ENCODE measurements at regions of chr7 and their contacts with region 1.

Region 1: DNA sequence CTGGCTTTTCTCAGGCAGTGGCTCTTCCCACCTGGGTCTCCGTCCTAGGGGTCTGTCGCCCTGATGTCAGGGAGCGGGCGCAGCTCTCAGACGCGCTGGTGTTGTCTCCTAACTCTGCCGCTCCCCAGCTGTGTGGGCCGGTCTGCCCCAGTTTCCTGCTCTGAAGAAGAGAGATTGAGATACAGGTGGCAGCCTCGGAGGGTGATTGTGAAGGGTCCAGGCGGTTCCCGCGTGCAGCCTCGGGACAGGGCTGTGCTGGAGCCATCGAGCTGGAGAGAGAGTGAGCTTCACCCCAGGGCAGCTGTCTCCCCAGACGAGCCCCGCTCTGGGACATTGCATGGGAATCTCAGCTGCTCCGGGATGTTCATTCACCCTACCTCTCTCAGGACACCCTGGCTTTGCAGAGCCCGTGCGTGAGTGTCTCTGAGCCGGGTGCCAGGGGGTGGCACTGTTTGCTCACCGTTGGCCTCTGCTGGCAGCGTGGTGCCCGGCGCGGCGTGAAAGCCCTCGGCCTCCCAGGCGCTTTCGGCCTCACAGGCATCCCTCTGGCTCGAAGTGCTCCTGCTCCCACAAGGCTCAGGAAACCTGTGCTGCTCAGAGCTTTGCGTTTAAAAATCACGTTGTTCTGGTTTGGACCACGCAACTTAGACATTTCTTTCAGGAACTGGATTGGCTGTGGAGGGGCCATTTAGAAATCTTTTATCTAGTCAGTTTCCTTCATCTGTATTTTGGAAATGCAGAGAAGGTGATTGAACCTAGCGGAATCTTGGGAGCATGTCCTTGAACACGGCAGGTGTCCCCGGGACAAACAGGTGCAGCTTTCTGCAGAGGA is 33.8 kb upstream of the ZFAND2A start:
- DNase-seq: peak; percentile 90
- H3K4me3 ChIP-seq: no peak overlapping the region
- H3K27ac ChIP-seq: no peak overlapping the region
- H3K4me1 ChIP-seq: peaks cover 0 to 3% of the 10 kb centered on the region in 2 experiments; a peak in 1 of 4 replicates
- H3K27me3 ChIP-seq: peaks cover 29% of the 10 kb centered on the region; the same call in 1 of the 2 replicates
- CTCF ChIP-seq: peak; percentile 75
- EP300 ChIP-seq: no peak
- RAD21 ChIP-seq: peak; percentile 90

Region 2: GRCh38 chr7:901381-902154 is 292.2 kb before region 1 on chr7:
- CTCF ChIA-PET with region 1: no interaction called
- POLR2A ChIA-PET with region 1: no interaction called
- DNase-seq: peak; percentile 100
- H3K4me3 ChIP-seq: peak overlapping the region in 1 of 2 experiments; percentile 25; a peak in 1 of 4 replicates
- H3K27ac ChIP-seq: peak overlapping the region in 1 of 2 experiments; percentile 39; a peak in 1 of 4 replicates
- H3K4me1 ChIP-seq: peaks cover 14 to 19% of the 10 kb centered on the region in 2 experiments; a peak in 3 of 4 replicates
- H3K27me3 ChIP-seq: no peaks in the 10 kb centered on the region
- CTCF ChIP-seq: no peak
- EP300 ChIP-seq: no peak
- RAD21 ChIP-seq: no peak

Region 3: DNA sequence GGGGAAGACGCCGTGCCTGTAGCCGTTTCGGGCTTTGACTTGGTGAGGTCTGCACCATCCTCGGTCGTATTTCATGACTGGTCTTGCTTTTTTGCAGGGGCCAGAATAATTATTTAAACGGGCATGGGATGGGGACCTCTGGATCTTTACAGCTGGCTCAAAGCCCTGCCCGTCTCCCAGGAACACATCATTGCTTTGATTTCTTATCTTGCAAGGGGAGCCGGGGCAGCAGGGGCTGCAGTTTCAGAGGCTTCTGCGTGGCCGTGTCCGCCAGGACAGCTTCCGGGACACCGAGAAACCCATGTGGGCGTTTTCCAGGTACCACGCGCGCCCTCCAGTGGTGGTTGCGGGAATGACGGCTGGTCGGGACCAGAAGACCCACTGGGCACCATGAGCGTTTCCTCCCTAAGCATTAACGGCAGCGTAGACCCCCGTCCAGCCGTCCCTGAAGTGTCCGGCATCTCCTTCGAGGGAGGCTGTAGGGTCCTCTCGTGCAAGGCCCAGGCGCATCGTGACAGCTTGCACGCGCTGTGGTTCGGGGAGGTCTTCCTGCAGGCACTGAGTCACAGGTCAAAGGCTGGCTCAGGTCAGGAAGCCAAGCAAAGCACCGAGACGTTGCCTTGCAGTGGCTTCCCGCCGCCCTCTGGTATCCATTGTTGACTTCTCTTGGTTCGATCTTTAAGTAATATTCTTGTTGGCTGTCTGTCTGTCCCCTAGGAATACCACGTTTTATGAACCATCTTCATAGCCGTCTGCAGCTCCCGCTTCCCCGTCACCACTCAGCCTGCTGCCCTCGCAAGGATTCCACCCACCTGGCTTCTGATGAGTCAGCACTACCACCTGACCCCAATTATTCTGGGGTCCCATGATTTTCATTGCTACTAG is 17.6 kb before region 1 on chr7:
- CTCF ChIA-PET with region 1: interaction called, 73 read pairs
- POLR2A ChIA-PET with region 1: interaction called, 3 read pairs
- DNase-seq: peak; percentile 93
- H3K4me3 ChIP-seq: peak overlapping the region; percentile 4 to 36; a peak in 2 of 4 replicates
- H3K27ac ChIP-seq: no peak overlapping the region
- H3K4me1 ChIP-seq: peaks cover 0 to 2% of the 10 kb centered on the region in 2 experiments; a peak in 1 of 4 replicates
- H3K27me3 ChIP-seq: no peaks in the 10 kb centered on the region
- CTCF ChIP-seq: peak; percentile 91
- EP300 ChIP-seq: no peak
- RAD21 ChIP-seq: peak; percentile 74

Region 4: GRCh38 chr7:1219498-1219897 is 25.7 kb after region 1 on chr7:
- CTCF ChIA-PET with region 1: interaction called, 36 read pairs
- POLR2A ChIA-PET with region 1: no interaction called
- DNase-seq: peak; percentile 38
- H3K4me3 ChIP-seq: no peak overlapping the region
- H3K27ac ChIP-seq: no peak overlapping the region
- H3K4me1 ChIP-seq: no peaks in the 10 kb centered on the region
- H3K27me3 ChIP-seq: peaks cover 97% of the 10 kb centered on the region
- CTCF ChIP-seq: no peak
- EP300 ChIP-seq: no peak
- RAD21 ChIP-seq: no peak

Region 5: GRCh38 chr7:1240517-1241257 is 46.9 kb after region 1 on chr7:
- CTCF ChIA-PET with region 1: interaction called, 10 read pairs
- POLR2A ChIA-PET with region 1: no interaction called
- DNase-seq: no peak
- H3K4me3 ChIP-seq: no peak overlapping the region
- H3K27ac ChIP-seq: no peak overlapping the region
- H3K4me1 ChIP-seq: no peaks in the 10 kb centered on the region
- H3K27me3 ChIP-seq: peaks cover 92% of the 10 kb centered on the region
- CTCF ChIP-seq: no peak
- EP300 ChIP-seq: no peak
- RAD21 ChIP-seq: no peak

Region 6: GRCh38 chr7:1268738-1269313 is 75.0 kb after region 1 on chr7:
- CTCF ChIA-PET with region 1: interaction called, 10 read pairs
- POLR2A ChIA-PET with region 1: no interaction called
- DNase-seq: no peak
- H3K4me3 ChIP-seq: no peak overlapping the region
- H3K27ac ChIP-seq: no peak overlapping the region
- H3K4me1 ChIP-seq: no peaks in the 10 kb centered on the region
- H3K27me3 ChIP-seq: peaks cover 75% of the 10 kb centered on the region
- CTCF ChIP-seq: no peak
- EP300 ChIP-seq: no peak
- RAD21 ChIP-seq: no peak

Region 7: GRCh38 chr7:1312136-1313070 is 118.6 kb after region 1 on chr7:
- CTCF ChIA-PET with region 1: no interaction called
- POLR2A ChIA-PET with region 1: no interaction called
- DNase-seq: no peak
- H3K4me3 ChIP-seq: no peak overlapping the region
- H3K27ac ChIP-seq: no peak overlapping the region
- H3K4me1 ChIP-seq: no peaks in the 10 kb centered on the region
- H3K27me3 ChIP-seq: peaks cover 89% of the 10 kb centered on the region
- CTCF ChIP-seq: no peak
- EP300 ChIP-seq: no peak
- RAD21 ChIP-seq: no peak

Region 8: DNA sequence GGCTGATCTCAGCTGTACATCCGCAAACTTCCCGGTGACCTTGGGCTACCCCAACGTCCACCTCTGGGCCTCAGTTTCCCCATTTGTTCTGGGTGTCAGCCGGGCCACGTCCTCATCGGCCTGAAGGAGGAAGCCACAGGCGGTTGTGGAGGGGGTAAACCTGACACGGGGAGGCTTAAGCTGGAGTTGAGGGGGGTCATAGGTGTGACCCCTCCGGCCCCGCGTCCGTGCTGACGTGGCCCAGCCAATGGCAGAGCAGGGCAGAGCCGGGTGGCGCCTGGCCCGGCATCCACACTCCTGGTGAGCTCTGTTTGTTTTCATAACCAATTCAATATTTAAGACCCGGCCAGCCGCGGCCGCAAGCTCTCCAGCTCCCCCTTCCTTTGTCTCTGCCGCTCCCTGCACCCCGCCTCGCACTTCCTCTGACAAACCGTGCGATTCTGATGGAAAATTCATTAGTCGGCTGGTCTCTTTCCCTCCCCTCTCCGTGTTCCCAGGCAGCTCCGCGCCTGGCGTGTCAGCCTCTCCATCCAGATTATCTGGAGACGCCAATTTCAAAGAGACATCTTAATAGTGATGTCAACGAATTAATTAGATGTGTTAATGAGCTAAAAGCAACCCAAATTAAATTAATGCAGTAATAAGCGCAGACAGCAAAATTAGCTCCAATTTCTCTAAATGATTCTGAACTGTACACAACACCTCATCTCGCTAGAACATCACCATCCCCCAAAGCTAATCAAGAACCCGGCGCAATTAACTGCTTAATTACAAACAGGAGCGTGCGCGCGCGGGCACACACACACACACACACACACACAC is 210.0 kb after region 1 on chr7:
- CTCF ChIA-PET with region 1: interaction called, 25 read pairs
- POLR2A ChIA-PET with region 1: no interaction called
- DNase-seq: peak; percentile 77
- H3K4me3 ChIP-seq: no peak overlapping the region
- H3K27ac ChIP-seq: no peak overlapping the region
- H3K4me1 ChIP-seq: no peaks in the 10 kb centered on the region; a peak in 1 of 4 replicates
- H3K27me3 ChIP-seq: peaks cover 99% of the 10 kb centered on the region
- CTCF ChIP-seq: peak; percentile 17; the same call in 1 of the 2 replicates
- EP300 ChIP-seq: no peak
- RAD21 ChIP-seq: no peak

Region 9: DNA sequence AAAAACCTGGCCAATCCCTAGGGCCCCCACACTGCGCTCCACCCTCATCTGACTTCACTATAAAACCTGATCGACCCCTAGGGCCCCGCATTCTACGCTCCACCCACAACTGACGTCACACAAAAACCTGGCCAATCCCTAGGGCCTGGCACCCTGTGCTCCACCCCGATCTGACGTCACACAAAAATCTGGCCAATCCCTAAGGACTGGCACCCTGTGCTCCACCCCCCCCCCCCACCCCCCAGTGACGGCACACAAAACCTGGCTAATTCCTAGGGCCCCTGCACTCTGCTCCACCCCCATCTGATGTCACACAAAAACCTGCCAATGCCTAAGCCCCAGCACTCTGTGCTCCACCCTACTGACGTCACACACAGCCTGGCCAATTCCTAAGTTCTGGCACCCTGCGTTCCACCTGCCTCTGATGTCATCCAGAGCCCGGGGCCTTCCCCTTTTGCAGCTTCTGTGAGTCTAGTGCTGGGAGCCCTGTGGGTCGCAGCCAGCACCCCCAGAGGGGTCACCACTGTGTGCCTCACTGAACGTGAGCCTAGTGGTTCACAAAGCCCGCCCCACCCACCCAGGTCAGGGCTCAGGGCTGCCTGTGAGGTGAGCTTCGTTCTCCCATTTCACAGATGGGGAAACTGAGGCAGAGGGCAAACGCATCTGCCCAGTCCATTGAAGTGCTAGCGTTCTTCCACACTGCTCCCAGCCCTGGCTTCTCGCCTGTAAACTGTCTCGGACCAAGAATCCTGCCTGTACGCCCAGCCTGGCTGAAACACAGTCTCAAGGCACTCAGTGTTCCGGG is 224.9 kb after region 1 on chr7:
- CTCF ChIA-PET with region 1: interaction called, 42 read pairs
- POLR2A ChIA-PET with region 1: no interaction called
- DNase-seq: peak; percentile 78
- H3K4me3 ChIP-seq: no peak overlapping the region
- H3K27ac ChIP-seq: no peak overlapping the region
- H3K4me1 ChIP-seq: peaks cover 0 to 4% of the 10 kb centered on the region in 2 experiments; a peak in 2 of 4 replicates
- H3K27me3 ChIP-seq: peaks cover 75% of the 10 kb centered on the region
- CTCF ChIP-seq: no peak
- EP300 ChIP-seq: no peak
- RAD21 ChIP-seq: no peak

Region 10: DNA sequence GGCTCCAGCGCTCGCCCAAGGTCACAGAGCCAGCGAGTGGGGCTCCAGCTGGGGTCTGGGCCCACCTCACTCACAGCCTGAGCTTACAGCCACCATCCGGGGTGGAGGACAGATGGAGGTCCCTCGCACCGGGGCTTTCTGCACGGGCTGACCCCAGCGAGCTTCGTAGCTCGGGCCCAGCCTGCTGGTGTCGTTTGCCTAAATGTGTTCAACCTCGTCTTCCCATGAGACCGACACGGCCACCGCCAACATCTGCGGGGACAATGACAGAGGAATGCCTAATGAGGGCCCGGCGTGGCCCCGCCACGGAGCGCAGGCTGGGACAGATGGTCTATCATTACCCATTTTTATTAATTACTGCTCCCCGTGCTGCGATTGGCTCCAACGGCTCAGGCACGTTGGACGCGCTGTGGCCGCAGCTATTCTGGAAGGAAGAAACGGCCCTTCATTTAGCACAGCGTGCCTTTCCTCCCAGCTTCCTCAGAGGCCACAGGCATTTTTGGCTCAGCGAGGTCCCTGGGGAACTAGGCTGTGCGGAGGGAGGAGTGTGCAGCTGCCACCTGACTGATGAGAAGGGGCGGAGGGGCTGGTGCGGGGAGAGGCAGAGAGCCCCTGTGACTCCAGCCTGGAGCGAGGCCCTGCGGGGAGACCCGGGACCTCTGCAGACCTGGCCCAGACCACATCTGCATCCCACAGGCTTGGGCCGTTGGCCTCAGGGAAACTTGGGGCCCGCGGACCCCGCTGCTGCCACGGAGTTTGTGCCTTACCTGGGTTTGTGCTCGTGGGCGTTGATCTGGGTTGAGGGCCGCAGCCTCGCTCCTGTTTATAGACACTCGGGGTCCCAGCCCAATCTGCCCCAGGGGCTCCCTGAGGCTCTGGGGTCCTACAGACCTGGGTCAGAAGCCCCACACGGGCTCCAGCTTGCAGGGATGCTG is 453.4 kb after region 1 on chr7:
- CTCF ChIA-PET with region 1: no interaction called
- POLR2A ChIA-PET with region 1: no interaction called
- DNase-seq: peak; percentile 53
- H3K4me3 ChIP-seq: no peak overlapping the region
- H3K27ac ChIP-seq: peak overlapping the region in 1 of 2 experiments; percentile 97; a peak in 2 of 4 replicates
- H3K4me1 ChIP-seq: peaks cover 0 to 76% of the 10 kb centered on the region in 2 experiments; a peak in 1 of 4 replicates
- H3K27me3 ChIP-seq: peaks cover 29% of the 10 kb centered on the region
- CTCF ChIP-seq: no peak
- EP300 ChIP-seq: no peak
- RAD21 ChIP-seq: no peak

Region 11: GRCh38 chr7:1742555-1743303 is 548.9 kb after region 1 on chr7:
- CTCF ChIA-PET with region 1: no interaction called
- POLR2A ChIA-PET with region 1: no interaction called
- DNase-seq: peak; percentile 94
- H3K4me3 ChIP-seq: no peak overlapping the region
- H3K27ac ChIP-seq: peak overlapping the region in 1 of 2 experiments; percentile 67; a peak in 2 of 4 replicates
- H3K4me1 ChIP-seq: peaks cover 0 to 36% of the 10 kb centered on the region in 2 experiments; a peak in 1 of 4 replicates
- H3K27me3 ChIP-seq: 0 out of 2 replicates have a peak, but pooled peaks cover 11% of the 10 kb centered on the region
- CTCF ChIP-seq: no peak
- EP300 ChIP-seq: no peak
- RAD21 ChIP-seq: peak; percentile 15; the same call in 1 of the 2 replicates

Measured in SK-N-SH (cell line).